ENCODE measurements at regions of chr22 and their contacts with region 1.

Region 1: DNA sequence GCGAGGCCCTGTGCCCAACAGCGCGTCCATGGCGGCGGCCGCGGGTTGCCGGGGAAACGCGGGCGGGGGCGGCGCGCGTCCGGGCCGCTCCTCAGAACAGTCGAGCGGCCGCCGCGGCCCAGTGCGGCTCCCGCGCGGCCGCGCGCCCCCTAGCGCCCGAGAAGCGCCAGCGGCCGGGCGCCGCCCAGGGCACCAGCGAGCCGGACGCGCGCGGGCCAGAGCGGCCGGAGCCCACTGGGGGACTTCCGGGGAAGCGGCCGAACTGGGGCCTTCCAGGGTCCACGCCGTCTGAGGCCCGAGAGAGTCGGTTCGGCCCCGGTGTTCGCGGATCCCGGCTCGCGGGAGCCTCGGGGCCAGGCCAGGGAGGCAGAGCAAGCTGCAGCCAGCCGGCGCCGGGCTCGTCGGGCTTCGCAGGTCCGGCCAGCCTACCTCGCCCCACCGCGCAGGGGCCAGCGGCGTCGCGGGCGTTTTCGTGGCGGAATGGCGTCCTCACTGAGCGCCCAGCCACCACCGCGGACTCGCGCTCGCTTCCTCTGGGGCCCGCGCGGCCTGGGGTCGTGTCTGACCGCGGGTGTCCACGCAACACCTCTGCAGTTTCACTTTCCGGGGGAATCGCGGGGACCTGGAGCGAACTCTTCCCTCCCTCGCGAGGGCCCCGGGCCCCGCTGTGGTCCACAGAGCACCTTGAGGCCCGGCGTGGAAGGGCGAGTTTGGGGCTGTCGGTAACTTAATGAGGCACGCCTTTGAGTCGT is at the start of gene DENND6B:
- DNase-seq: peak; percentile 93
- CTCF ChIP-seq: peak; percentile 72

Region 2: GRCh38 chr22:50250555-50251476 is 76.3 kb before region 1 on chr22 and contains the start of gene HDAC10:
- CTCF ChIA-PET with region 1: interaction called, 11 read pairs
- POLR2A ChIA-PET with region 1: no interaction called
- DNase-seq: peak; percentile 93
- CTCF ChIP-seq: no peak

Region 3: DNA sequence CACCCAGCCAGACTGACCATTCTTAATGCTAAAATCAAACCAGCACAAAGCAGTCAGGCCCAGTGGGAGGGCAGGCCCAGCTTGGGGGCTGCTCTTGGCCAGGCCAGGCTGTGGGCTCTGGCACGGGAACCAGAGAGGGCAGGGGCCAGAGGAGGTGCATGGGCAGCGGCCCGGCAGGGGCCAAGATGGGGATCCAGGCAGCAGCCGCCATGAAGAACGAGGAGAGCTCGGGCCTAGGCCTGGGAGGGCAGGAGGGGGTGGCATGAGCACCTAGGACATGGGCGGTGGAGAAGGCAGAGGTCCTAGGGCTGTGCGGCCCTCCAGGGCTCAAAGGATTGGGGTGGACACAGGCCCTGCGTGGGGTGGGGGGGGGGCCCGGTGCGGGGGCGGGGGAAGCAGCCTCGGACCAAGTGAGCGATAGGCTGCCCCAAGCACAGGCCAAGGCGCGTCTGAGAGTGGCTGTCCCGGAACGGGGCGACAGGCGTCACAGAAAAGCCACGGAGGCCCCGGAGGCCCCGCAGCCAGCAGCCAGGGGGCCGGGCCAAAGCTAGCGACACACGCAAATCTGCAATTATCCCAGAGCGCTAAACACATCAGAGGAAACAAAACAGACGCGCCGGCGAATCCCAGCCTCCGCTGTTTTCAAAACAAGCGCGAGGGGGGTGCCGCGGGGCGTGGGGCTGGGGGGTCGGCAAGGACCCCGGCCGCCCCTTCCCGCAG is 28.0 kb before region 1 on chr22:
- CTCF ChIA-PET with region 1: interaction called, 12 read pairs
- POLR2A ChIA-PET with region 1: interaction called, 7 read pairs
- DNase-seq: no peak
- CTCF ChIP-seq: no peak

Region 4: DNA sequence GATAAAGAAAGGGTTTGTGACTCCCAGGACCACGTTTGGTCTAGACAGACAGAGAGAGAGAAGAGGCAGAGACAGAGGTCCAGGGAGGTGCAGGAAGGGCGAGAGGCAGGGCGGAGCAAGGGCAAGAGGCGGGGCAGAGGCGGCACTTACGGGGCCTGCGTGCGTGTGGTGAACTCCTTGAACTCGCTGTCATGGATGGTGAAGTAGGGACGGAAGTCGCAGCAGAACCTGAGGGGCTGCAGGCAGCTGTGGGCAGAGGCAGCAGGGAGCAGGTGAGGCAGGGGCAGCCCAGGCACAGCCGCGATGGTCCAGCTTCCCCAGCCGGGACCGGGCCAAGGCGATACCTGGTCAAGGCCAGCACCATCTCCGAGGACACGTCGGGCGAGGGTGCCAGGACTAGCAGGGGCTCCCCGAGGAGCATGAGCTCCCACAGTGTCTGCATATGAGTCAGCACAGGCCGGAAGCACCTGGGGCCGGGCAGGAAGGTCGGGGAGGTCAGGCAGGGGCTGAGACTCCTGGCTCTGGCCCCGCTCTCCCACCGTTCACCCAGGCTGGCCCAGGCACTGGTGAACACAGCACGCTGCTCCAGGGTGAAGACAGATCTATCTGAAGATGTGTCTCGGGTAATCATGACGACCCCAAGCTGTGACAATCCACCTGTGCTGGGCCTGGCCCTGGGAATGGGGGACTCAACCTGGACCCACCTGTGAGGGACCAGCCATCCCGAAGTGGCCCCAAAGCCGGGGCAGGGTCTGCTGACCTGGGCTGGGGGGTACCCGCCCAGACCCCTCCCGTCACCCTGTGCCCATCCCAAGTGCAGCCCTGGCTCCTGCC is 12.5 kb before region 1 on chr22:
- CTCF ChIA-PET with region 1: interaction called, 16 read pairs
- POLR2A ChIA-PET with region 1: no interaction called
- DNase-seq: peak; percentile 90
- CTCF ChIP-seq: no peak

Region 5: GRCh38 chr22:50341977-50342650 is 15.0 kb after region 1 on chr22:
- CTCF ChIA-PET with region 1: interaction called, 44 read pairs
- POLR2A ChIA-PET with region 1: no interaction called
- DNase-seq: peak; percentile 83
- CTCF ChIP-seq: peak; percentile 95